H1 (cell line): ENCODE measurements at regions of chr19 and their contacts with region 1.

Region 1: DNA sequence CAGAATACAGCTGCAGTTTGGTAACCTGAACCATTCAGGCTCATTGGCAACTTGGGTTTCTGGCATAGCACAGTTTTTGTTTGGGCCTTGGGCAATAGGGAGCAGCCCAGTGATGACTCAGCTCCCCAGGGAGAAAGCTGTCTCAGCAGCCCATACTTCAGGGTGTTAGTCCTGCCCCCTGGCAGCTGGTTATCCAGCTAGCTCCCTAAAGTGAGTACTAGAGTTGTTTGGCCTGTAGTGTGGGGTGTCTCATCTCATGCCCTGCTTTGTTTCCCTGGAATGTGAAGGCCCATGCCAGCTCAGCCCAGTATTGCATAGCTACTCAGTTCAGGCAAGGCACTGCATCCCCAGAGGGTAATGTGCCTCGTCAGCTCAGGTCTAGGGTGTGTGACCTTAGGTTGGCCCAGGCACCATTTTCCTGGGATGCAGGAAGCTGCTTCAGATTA is 18.2 kb upstream of the ZNF543 start:
- DNase-seq: no peak
- H3K4me3 ChIP-seq: no peak overlapping the region
- H3K27ac ChIP-seq: no peak overlapping the region
- H3K4me1 ChIP-seq: peaks cover 0 to 4% (median 2%) of the 10 kb centered on the region in 4 experiments; a peak in 2 of 7 replicates
- H3K27me3 ChIP-seq: no peaks in the 10 kb centered on the region
- CTCF ChIP-seq: no peak
- EP300 ChIP-seq: no peak
- POLR2A ChIP-seq: no peak
- RAD21 ChIP-seq: no peak

Region 2: GRCh38 chr19:57267291-57267690 is 34.8 kb before region 1 on chr19:
- CTCF ChIA-PET with region 1: no interaction called
- POLR2A ChIA-PET with region 1: no interaction called
- DNase-seq: no peak
- H3K4me3 ChIP-seq: no peak overlapping the region
- H3K27ac ChIP-seq: no peak overlapping the region
- H3K4me1 ChIP-seq: peaks cover 0 to 7% (median 1%) of the 10 kb centered on the region in 4 experiments; a peak in 2 of 7 replicates
- H3K27me3 ChIP-seq: no peaks in the 10 kb centered on the region
- CTCF ChIP-seq: no peak
- EP300 ChIP-seq: no peak
- POLR2A ChIP-seq: no peak
- RAD21 ChIP-seq: no peak

Region 3: DNA sequence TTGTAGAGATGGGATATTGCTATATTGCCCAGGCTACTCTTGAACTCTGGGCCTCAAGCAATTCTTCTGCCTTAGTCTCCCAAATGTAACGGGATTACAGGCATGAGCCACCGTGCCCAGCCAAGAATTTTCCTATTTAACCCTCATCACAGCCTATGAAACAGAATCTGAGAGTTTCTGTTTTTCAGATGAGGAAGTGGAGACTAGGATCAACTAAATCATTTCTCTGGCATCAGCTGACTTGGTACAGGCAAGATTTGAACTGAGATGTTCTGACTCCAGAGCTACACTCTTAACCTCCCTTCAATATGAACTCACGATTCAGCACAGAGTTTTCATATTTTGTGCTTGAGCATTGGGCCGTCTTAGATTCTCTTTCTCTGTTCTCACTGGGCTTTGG is 13.7 kb before region 1 on chr19:
- CTCF ChIA-PET with region 1: interaction called, 5 read pairs
- POLR2A ChIA-PET with region 1: interaction called, 13 read pairs
- DNase-seq: no peak
- H3K4me3 ChIP-seq: no peak overlapping the region
- H3K27ac ChIP-seq: no peak overlapping the region
- H3K4me1 ChIP-seq: no peaks in the 10 kb centered on the region
- H3K27me3 ChIP-seq: no peaks in the 10 kb centered on the region
- CTCF ChIP-seq: no peak
- EP300 ChIP-seq: no peak
- POLR2A ChIP-seq: no peak
- RAD21 ChIP-seq: no peak